ENCODE measurements at regions of chr3 and their contacts with region 1.

Region 1: GRCh38 chr3:124504332-124505059 is 225.8 kb upstream of the UMPS start:
- DNase-seq: peak; percentile 61 to 80 (median 78)
- ATAC-seq: peak; percentile 93 to 95
- H3K4me3 ChIP-seq: no peak overlapping the region
- H3K27ac ChIP-seq: peak overlapping the region; percentile 6
- H3K4me1 ChIP-seq: peaks cover 4% of the 10 kb centered on the region
- H3K27me3 ChIP-seq: no peaks in the 10 kb centered on the region

Region 2: DNA sequence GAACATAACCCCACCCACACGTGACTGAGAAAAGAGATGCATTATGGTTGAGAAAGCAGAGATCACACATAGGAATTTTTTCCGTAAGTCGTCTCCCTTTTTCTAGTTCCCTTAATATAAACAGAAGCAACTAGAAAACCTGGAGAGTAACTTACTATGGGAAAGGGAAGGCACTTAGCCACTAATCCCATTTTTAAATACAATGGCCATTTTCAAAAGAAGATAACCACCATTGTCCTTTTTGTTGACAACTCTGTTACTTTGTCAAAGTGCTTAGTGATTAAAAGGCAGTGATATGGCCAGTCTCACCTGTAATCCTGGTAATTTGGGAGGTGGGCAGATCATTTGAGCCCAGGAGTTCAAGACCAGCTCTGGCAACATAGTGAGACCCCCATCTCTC is 41.4 kb after region 1 on chr3:
- intact Hi-C with region 1: loop called in 2 of 4 experiments (anchors 5 kb)
- DNase-seq: no peak
- ATAC-seq: no peak
- H3K4me3 ChIP-seq: no peak overlapping the region
- H3K27ac ChIP-seq: no peak overlapping the region
- H3K4me1 ChIP-seq: no peaks in the 10 kb centered on the region
- H3K27me3 ChIP-seq: no peaks in the 10 kb centered on the region